ENCODE measurements at regions of chr3 and their contacts with region 1.

Region 1: GRCh38 chr3:126752303-126752842 is 48.3 kb downstream of the CHCHD6 start:
- DNase-seq: peak; percentile 81
- H3K4me3 Mint-ChIP-seq: no peak overlapping the region
- H3K27ac Mint-ChIP-seq: peak overlapping the region; percentile 76
- H3K4me1 Mint-ChIP-seq: peaks cover 39% of the 10 kb centered on the region
- H3K27me3 Mint-ChIP-seq: no peaks in the 10 kb centered on the region
- CTCF ChIP-seq: peak; percentile 84

Region 2: DNA sequence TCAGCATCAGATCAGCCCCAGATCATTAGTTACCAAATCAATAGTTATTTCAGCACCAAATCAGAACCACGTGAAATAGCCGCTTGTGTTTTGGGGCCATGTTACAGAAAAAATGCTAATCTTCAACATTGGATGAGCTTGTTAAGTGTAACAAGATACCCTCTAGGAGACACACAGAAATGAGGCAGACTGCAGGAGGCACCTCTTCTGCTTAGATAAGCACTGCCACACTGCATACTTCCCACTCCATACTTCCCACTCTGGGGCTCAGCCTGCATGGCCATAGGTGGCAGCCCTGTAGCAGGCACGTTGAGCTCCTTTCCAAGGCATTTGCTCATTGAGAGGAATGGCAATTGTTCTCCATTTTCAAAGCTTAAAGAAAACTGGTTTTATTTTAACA is 25.0 kb after region 1 on chr3:
- CTCF ChIA-PET with region 1: interaction called, 23 read pairs
- POLR2A ChIA-PET with region 1: interaction called, 33 read pairs
- intact Hi-C with region 1: loop called (anchors 1 kb)
- DNase-seq: no peak
- H3K4me3 Mint-ChIP-seq: no peak overlapping the region
- H3K27ac Mint-ChIP-seq: no peak overlapping the region
- H3K4me1 Mint-ChIP-seq: peaks cover 20% of the 10 kb centered on the region
- H3K27me3 Mint-ChIP-seq: no peaks in the 10 kb centered on the region
- CTCF ChIP-seq: no peak

Region 3: GRCh38 chr3:126858887-126859286 is 106.5 kb after region 1 on chr3:
- CTCF ChIA-PET with region 1: interaction called, 7 read pairs
- POLR2A ChIA-PET with region 1: no interaction called
- intact Hi-C with region 1: loop called (anchors 1 kb)
- DNase-seq: peak; percentile 99
- H3K4me3 Mint-ChIP-seq: no peak overlapping the region
- H3K27ac Mint-ChIP-seq: peak overlapping the region; percentile 4
- H3K4me1 Mint-ChIP-seq: peaks cover 23% of the 10 kb centered on the region
- H3K27me3 Mint-ChIP-seq: no peaks in the 10 kb centered on the region
- CTCF ChIP-seq: no peak

Region 4: DNA sequence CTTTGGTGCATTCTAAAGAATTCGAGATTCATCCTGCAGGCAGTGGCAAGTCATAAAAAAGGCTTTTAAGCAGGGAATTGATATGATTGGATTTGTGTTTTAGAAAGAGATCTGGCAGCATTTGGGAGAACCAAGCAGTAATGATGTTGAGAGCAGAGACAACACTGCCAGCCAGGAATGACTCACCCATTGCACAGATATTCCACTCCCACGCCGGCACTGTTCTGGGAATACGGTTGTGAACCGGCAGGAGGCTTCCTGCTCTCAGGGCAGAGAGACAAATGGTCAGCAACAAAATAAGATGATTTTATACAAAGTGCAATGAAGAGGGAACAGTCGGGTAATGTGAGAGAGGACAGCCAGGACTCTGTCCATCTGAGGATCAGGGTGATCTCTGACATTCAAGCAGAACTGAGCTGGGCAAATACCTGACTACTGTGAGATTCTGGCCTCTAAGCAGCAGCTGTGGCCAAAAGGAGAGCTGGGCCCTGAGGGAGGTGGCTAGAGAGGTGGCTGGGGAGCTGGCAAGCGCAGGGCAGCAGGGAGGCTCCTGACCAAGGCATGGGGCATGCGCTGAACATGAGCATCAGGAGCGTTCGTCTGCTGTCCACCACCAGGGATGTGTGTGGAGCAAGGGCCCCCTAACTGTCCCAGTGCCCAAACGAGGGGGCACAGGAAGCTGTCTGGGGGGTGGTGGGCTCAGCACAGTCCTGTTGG is 174.5 kb after region 1 on chr3:
- CTCF ChIA-PET with region 1: interaction called, 12 read pairs
- POLR2A ChIA-PET with region 1: interaction called, 4 read pairs
- intact Hi-C with region 1: no loop called
- DNase-seq: peak; percentile 93
- H3K4me3 Mint-ChIP-seq: no peak overlapping the region
- H3K27ac Mint-ChIP-seq: no peak overlapping the region
- H3K4me1 Mint-ChIP-seq: peaks cover 35% of the 10 kb centered on the region
- H3K27me3 Mint-ChIP-seq: no peaks in the 10 kb centered on the region
- CTCF ChIP-seq: peak; percentile 18

Region 5: GRCh38 chr3:126995926-126996512 is 243.6 kb after region 1 on chr3:
- CTCF ChIA-PET with region 1: interaction called, 20 read pairs
- POLR2A ChIA-PET with region 1: no interaction called
- intact Hi-C with region 1: no loop called
- DNase-seq: no peak
- H3K4me3 Mint-ChIP-seq: no peak overlapping the region
- H3K27ac Mint-ChIP-seq: no peak overlapping the region
- H3K4me1 Mint-ChIP-seq: peaks cover 5% of the 10 kb centered on the region
- H3K27me3 Mint-ChIP-seq: no peaks in the 10 kb centered on the region
- CTCF ChIP-seq: no peak

Region 6: DNA sequence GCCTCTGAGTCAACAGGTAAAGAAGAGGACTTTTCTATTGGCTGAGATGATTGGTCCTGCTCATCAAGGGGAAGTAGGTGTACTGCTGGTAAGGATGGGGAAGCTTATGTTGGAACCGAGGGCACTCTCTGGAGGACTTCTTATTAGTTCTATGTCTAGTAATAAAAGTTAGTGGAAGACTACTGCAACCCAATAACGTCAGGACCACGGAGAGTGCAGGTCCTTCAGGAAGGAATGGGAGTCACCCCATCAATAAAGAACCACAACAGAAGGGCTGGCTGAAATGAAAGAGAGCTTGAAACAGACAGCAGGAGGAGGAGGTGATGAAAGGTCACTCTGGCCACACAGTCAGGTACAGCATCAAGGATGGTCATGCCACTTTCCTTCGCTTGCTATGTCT is 371.7 kb after region 1 on chr3:
- CTCF ChIA-PET with region 1: no interaction called
- POLR2A ChIA-PET with region 1: no interaction called
- intact Hi-C with region 1: no loop called
- DNase-seq: peak; percentile 45
- H3K4me3 Mint-ChIP-seq: no peak overlapping the region
- H3K27ac Mint-ChIP-seq: no peak overlapping the region
- H3K4me1 Mint-ChIP-seq: no peaks in the 10 kb centered on the region
- H3K27me3 Mint-ChIP-seq: peaks cover 30% of the 10 kb centered on the region
- CTCF ChIP-seq: no peak

Region 7: DNA sequence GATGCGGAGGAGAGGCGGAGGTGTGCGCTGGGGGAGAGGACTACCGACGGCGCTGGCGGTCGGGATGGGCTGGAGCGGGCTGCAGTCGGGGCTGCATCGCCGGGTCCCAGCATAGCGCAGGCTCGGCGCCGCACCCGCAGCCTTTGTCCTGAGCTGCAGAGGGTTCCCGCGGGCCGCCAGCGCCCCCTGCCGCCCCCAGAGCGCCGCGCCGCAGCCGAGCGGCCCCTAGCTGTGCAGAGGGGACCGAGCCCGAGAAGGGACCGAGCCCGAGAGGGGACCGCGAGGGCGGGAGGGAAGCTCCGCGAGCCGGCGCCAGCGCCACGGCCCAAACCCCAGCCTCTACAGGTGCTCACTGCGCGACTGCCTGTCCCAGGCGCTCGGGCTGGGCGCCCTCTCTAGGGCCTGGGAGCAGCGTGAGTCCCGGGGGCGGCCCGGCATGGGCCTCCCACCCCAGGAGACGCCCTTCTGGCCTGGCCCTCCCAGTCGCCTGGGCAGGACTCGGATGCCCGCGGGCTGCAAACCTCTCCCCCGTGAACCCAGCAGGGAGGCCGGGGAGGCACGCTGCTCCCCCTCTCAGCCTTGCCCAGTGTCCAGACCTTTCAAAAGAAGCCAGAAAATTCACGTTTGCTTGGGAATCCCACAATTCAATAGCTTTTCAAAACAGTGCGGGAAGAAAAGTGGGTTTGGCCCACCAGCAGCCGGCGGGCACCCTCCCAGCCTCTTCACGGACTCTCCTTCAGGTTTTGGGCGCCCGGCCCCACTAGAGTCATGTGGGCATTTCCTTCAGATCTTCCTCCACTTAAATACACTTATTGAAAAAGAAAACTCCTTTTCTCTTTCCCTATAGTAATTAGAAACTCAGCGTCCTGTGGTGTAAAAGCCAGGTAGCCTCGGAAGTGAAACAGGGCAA is 703.4 kb after region 1 on chr3:
- CTCF ChIA-PET with region 1: interaction called, 76 read pairs
- POLR2A ChIA-PET with region 1: interaction called, 7 read pairs
- intact Hi-C with region 1: loop called (anchors 1 kb)
- DNase-seq: peak; percentile 76
- H3K4me3 Mint-ChIP-seq: peak overlapping the region; percentile 62
- H3K27ac Mint-ChIP-seq: no peak overlapping the region
- H3K4me1 Mint-ChIP-seq: peaks cover 28% of the 10 kb centered on the region
- H3K27me3 Mint-ChIP-seq: no peaks in the 10 kb centered on the region
- CTCF ChIP-seq: peak; percentile 98

Measured in MCF 10A (cell line).